ENCODE measurements at regions of chr2 and their contacts with region 1.

Region 1: GRCh38 chr2:230411570-230412370 is 4.2 kb upstream of the SP100 start:
- DNase-seq: peak; percentile 95
- H3K4me3 Mint-ChIP-seq: peak overlapping the region; percentile 99
- H3K27ac Mint-ChIP-seq: peak overlapping the region; percentile 99
- H3K4me1 Mint-ChIP-seq: peaks cover 61% of the 10 kb centered on the region
- H3K27me3 Mint-ChIP-seq: no peaks in the 10 kb centered on the region

Region 2: GRCh38 chr2:229921892-229922445 is 489.8 kb before region 1 on chr2 and contains the start of gene TRIP12:
- intact Hi-C with region 1: loop called (anchors 10 kb)
- DNase-seq: peak; percentile 96
- H3K4me3 Mint-ChIP-seq: peak within 1 kb of the TSS; percentile 100
- H3K27ac Mint-ChIP-seq: peak within 1 kb of the TSS; percentile 99
- H3K4me1 Mint-ChIP-seq: peaks cover 31% of the 10 kb centered on the region
- H3K27me3 Mint-ChIP-seq: no peaks in the 10 kb centered on the region
- total RNA-seq, gene TRIP12: 240 and 246 TPM in 2 replicates

Region 3: DNA sequence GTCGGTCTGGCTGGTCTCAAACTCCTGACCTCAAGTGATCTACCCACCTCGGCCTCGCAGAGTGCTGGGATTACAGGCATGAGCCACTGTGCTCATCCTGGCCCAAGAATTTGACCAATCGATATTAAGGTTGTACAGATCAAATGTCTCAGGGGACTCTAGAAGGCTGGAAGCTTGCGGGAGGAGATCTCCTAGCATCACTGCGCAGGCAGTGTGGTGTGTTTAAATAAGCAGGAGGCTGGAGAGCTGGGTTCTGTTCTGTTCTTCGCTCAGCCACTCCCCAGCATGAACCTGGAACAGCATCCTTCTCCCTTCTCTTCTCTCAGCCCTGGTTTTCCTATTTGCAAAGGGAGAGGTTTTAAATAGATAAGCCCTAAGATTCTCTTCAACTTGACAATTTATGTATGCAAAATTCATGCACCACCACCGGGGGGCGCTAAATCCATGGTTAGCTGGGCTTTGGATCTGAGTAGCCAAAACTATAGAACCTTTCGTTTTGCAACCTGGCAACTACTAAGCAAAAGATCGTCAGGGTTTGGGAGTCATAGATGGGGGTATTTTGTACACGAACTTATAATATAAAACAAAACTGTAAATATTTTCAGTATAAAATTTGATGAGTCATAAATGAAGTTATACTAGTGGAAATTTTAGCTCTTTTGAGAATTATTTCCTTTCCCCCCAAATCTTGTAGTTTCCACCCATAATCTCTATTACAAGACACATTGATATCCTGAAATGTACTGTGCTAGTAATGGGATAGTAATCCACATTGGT is 403.7 kb before region 1 on chr2:
- intact Hi-C with region 1: loop called (anchors 10 kb)
- DNase-seq: peak; percentile 94
- H3K4me3 Mint-ChIP-seq: no peak overlapping the region
- H3K27ac Mint-ChIP-seq: no peak overlapping the region
- H3K4me1 Mint-ChIP-seq: peaks cover 2% of the 10 kb centered on the region
- H3K27me3 Mint-ChIP-seq: no peaks in the 10 kb centered on the region

Region 4: DNA sequence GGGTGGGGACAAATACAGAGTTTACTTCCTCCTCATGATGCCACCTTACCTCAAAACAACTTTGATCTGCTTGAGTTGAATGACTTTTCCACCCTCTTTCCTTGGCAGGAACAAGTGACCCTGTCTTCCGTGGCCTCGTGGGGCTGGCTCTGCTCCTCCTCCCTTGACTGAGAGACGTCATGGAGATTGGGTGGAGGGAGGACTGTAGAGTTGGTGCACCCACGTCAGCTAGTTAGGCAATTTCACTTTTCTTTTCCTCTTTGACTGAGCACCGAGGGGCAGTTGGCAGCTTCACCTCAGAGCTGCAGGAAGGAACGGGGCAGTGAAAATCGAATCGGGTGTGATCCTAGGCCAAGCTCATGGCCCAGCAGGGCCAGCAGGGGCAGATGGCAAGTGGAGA is 186.3 kb before region 1 on chr2 and contains the start of gene SP140:
- intact Hi-C with region 1: loop called (anchors 2 kb)
- DNase-seq: peak; percentile 95
- H3K4me3 Mint-ChIP-seq: peak within 1 kb of the TSS; percentile 85
- H3K27ac Mint-ChIP-seq: peak within 1 kb of the TSS; percentile 98
- H3K4me1 Mint-ChIP-seq: peaks cover 62% of the 10 kb centered on the region
- H3K27me3 Mint-ChIP-seq: no peaks in the 10 kb centered on the region
- total RNA-seq, gene SP140: 236 and 241 TPM in 2 replicates

Region 5: GRCh38 chr2:230244211-230244610 is 167.6 kb before region 1 on chr2:
- intact Hi-C with region 1: no loop called
- DNase-seq: no peak
- H3K4me3 Mint-ChIP-seq: no peak overlapping the region
- H3K27ac Mint-ChIP-seq: no peak overlapping the region
- H3K4me1 Mint-ChIP-seq: peaks cover 9% of the 10 kb centered on the region
- H3K27me3 Mint-ChIP-seq: no peaks in the 10 kb centered on the region

Region 6: GRCh38 chr2:230326453-230327417 is 85.0 kb before region 1 on chr2 and contains the start of gene SP140L:
- intact Hi-C with region 1: loop called (anchors 2 kb)
- DNase-seq: peak; percentile 94
- H3K4me3 Mint-ChIP-seq: peak within 1 kb of the TSS; percentile 92
- H3K27ac Mint-ChIP-seq: peak within 1 kb of the TSS; percentile 90
- H3K4me1 Mint-ChIP-seq: peaks cover 67% of the 10 kb centered on the region
- H3K27me3 Mint-ChIP-seq: no peaks in the 10 kb centered on the region
- total RNA-seq, gene SP140L: 48.9 and 49.1 TPM in 2 replicates

Region 7: GRCh38 chr2:230441227-230441897 is 29.6 kb after region 1 on chr2:
- intact Hi-C with region 1: loop called (anchors 1 kb)
- DNase-seq: peak; percentile 82
- H3K4me3 Mint-ChIP-seq: peak overlapping the region; percentile 50
- H3K27ac Mint-ChIP-seq: peak overlapping the region; percentile 90
- H3K4me1 Mint-ChIP-seq: peaks cover 42% of the 10 kb centered on the region
- H3K27me3 Mint-ChIP-seq: no peaks in the 10 kb centered on the region

Region 8: GRCh38 chr2:230472621-230473018 is 60.9 kb after region 1 on chr2:
- intact Hi-C with region 1: loop called (anchors 1 kb)
- DNase-seq: peak; percentile 72
- H3K4me3 Mint-ChIP-seq: peak overlapping the region; percentile 5
- H3K27ac Mint-ChIP-seq: peak overlapping the region; percentile 85
- H3K4me1 Mint-ChIP-seq: peaks cover 34% of the 10 kb centered on the region
- H3K27me3 Mint-ChIP-seq: no peaks in the 10 kb centered on the region

Region 9: DNA sequence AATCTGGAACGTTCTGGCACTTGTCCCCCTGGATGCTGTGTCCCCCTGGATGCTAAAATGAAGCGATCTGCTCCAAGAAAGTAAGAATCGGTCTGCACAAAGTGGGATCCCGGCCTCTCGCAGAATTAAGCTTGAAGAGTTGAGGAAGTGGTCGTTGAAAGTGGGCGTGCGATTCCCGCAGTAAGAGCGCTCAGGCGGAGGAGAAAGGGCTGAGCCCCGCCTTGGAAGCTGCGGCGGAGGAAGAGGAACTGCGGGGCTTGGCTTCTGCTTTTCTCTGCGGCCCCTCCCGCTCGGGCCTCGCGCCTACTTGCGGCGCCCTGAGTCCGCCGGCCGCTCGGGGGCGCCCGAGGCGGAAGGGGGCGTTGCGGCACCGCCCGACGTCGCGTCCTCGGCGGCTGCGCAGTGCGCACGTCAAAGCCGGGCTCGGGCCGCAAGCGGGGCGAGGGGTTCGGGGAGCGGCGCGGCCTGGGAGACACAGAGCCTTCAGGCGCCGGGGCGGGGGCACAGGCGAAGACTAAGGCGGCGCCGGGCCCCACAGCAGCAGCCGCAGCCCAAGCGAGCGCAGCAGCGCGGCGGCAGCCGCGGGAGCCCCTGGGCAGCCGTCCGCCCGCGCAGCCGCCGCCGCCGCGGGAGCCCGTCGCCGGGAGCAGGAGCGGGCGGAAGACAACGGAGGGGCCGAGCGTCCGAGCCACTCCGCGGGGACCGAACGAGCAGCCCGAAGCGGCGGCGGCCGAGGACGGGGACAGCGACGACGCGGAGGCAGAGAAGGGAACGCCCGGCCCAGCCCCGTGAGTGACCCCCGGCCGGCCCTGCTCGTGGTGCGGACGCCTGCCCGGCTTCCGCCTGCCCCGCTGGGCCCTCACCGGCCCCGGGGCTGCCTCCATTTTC is 300.9 kb after region 1 on chr2 and contains the start of gene CAB39:
- intact Hi-C with region 1: no loop called
- DNase-seq: peak; percentile 98
- H3K4me3 Mint-ChIP-seq: peak within 1 kb of the TSS; percentile 92
- H3K27ac Mint-ChIP-seq: peak within 1 kb of the TSS; percentile 91
- H3K4me1 Mint-ChIP-seq: peaks cover 28% of the 10 kb centered on the region
- H3K27me3 Mint-ChIP-seq: no peaks in the 10 kb centered on the region
- total RNA-seq, gene CAB39: 166 and 168 TPM in 2 replicates